ENCODE measurements at regions of chr4 and their contacts with region 1.

Region 1: DNA sequence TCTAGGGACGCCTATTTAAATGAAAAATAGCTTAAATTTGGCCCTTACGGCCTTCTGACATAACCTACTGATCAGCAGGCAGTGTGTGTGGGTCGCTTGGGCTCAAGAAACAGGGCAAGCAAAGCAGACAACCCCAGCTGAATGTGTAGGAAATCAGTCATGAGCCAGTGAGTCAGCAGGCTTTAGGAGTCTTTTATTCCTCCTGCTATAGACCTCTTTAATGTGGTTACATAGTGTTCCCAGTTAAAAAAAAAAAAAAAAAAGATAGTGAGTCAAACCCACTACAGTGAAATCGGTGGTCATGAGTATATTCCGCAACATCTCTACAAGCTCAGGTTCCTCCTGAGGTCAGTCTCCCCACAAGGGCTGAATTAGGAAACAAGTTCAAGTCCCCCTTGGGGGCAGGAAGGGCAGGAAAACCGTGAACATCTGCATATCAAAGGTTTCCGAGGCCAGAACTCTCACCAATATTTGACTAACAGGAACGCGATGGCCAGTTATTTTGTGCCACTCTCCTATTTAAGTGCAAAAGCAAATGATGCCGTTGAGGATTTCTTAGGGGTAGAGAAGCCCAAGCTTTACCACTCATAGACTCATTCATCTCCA is 32.7 kb downstream of the ACSL1 start:
- DNase-seq: no peak
- ATAC-seq: peak; percentile 33; the same call in 2 of the 3 replicates
- H3K4me3 ChIP-seq: no peak overlapping the region
- H3K27ac ChIP-seq: no peak overlapping the region
- H3K4me1 ChIP-seq: peaks cover 15% of the 10 kb centered on the region
- H3K27me3 ChIP-seq: no peaks in the 10 kb centered on the region
- CTCF ChIP-seq: no peak
- EP300 ChIP-seq: no peak
- POLR2A ChIP-seq: no peak
- RAD21 ChIP-seq: no peak

Region 2: DNA sequence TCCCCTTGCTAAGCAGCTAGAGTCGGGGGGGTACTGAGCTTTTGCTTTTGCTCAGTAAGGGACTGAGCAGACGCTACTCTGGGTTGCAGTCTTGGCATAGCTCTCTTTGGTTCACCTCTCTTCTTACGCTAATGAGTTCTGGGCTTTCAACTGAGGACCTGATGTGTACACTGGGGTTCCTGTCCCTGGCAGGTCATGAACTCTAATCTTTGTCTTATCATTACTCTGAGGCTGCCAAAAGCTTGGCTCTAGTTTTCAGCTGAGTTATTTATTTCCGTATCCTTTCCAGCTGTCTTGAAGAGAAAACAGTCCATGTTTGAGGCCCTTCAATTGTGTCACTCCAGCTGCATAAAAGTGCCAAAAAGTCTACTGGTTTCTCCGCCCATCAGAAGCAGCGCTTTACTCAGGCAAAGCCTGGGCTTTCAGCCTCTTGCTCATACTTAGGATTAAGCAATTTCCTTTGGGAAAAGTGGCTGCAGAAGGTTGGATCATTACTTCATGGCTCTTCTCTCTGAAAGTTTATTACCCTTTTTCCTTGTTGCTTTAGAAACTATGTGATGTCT is 1009.0 kb before region 1 on chr4:
- CTCF ChIA-PET with region 1: no interaction called
- POLR2A ChIA-PET with region 1: no interaction called
- RAD21 ChIA-PET with region 1: no interaction called
- SMC1A ChIA-PET with region 1: no interaction called
- in situ Hi-C with region 1: no loop called
- intact Hi-C with region 1: no loop called
- DNase-seq: no peak
- ATAC-seq: no peak
- H3K4me3 ChIP-seq: no peak overlapping the region
- H3K27ac ChIP-seq: no peak overlapping the region
- H3K4me1 ChIP-seq: no peaks in the 10 kb centered on the region
- H3K27me3 ChIP-seq: no peaks in the 10 kb centered on the region
- CTCF ChIP-seq: no peak
- EP300 ChIP-seq: no peak
- POLR2A ChIP-seq: no peak
- RAD21 ChIP-seq: no peak

Region 3: GRCh38 chr4:184805462-184806228 is 12.6 kb after region 1 on chr4:
- CTCF ChIA-PET with region 1: interaction called, 11 read pairs
- POLR2A ChIA-PET with region 1: interaction called, 6 read pairs
- RAD21 ChIA-PET with region 1: interaction called, 3 read pairs
- SMC1A ChIA-PET with region 1: interaction called, 11 read pairs
- in situ Hi-C with region 1: no loop called
- intact Hi-C with region 1: no loop called
- DNase-seq: no peak
- ATAC-seq: peak; percentile 86
- H3K4me3 ChIP-seq: no peak overlapping the region
- H3K27ac ChIP-seq: no peak overlapping the region
- H3K4me1 ChIP-seq: peaks cover 13% of the 10 kb centered on the region
- H3K27me3 ChIP-seq: no peaks in the 10 kb centered on the region; a peak in 1 of 4 replicates
- CTCF ChIP-seq: no peak
- EP300 ChIP-seq: no peak
- POLR2A ChIP-seq: no peak
- RAD21 ChIP-seq: no peak